Activated CD4-positive, alpha-beta memory T cell treated with anti-CD3 and anti-CD28 coated beads, Interleukin-2, amount 10 ng/mL, durations not matched to agents 7 days and 5 days (primary cell): ENCODE measurements at regions of chr17 and their contacts with region 1.

Region 1: DNA sequence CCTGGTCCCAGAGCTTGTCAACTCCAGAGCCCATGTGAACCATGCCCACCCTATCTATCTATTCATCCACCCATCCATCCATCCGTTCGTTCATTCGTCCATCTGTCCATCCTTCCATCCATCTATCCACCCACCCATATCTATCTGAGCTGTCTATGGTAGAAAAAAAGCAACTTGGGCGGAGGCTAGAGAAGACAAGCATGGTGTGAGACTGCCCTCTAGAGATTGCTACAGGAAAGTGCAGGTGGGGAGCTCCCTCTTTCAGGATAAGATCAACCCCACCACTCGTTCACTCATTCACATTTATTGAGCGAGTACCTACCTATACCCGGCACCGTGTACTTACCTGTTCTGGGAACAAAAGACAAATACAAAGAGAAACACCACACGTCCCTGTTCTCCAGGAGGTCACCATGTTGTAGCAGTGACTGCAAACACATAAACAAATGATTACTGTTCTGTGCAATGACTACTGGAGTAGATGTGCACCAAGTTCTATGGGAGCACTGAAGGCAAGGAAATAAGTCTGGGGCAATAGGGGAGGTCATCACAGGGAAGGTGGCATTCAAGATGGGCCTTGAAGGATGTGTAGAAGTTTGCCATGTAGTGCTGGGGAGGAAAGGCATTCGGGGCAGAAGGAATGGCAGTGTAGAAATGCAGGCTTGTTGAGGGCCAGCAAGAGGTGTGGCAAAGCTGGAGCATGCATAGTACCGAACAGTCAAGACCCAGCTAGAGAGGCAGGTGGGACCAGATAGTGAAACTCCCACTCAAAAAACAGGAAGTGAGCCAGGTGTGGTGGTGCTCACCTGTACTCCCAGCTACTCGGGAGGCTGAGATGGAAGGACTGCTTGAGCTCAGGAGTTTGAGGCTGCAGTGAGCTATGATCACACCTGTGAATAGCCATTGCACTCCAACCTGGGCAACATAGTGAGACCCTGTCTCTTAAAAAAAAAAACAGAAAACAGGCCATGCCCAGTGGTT is 13.4 kb upstream of the ATP5MC1 start:
- DNase-seq: peak; percentile 58
- H3K4me3 Mint-ChIP-seq: no peak overlapping the region
- H3K27ac Mint-ChIP-seq: no peak overlapping the region
- H3K4me1 Mint-ChIP-seq: peaks cover 24% of the 10 kb centered on the region
- H3K27me3 Mint-ChIP-seq: peaks cover 3% of the 10 kb centered on the region

Region 2: DNA sequence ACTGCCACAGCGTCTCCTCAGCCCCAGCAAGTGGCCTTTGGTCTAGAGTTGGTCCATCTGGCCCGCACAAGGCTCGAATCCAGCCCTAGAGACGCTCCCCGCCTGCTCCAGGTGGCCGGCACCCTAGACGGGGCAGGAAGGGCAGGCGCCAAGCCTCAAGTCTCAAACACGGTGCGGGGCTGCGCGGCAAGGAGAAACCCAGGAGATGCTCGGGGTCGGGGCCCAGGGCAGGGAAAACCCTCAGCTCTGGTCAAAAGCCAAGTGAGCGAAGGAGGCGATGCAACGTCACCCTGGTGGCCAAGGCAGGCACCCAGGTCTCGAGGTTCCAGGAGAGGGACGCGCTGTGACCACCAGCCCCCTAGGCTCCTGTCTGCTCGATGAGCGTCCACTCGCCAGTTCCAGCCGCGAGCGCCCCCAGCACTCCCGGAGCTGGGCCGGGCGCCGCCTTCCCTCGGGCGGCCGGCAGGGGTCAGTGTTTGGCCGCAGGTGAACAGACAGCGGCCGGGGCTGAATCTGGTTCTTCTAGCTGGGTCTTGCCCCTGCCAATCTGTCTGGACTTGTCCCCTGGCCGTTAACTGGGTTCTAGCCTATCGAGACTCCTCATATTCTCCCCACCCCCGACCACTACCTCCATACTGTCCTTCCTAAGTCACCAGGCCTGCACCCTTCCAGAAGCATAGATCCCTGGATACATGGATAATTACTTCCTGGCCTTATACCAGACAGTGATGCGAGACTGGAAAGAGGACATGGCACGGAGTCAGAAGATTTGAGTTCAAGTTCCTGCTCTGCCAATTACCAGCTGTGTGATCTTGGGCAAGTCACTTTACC is 200.9 kb before region 1 on chr17:
- CTCF ChIA-PET with region 1: interaction called, 56 read pairs
- POLR2A ChIA-PET with region 1: interaction called, 5 read pairs
- DNase-seq: peak; percentile 71
- H3K4me3 Mint-ChIP-seq: no peak overlapping the region
- H3K27ac Mint-ChIP-seq: no peak overlapping the region
- H3K4me1 Mint-ChIP-seq: no peaks in the 10 kb centered on the region
- H3K27me3 Mint-ChIP-seq: peaks cover 53% of the 10 kb centered on the region

Region 3: DNA sequence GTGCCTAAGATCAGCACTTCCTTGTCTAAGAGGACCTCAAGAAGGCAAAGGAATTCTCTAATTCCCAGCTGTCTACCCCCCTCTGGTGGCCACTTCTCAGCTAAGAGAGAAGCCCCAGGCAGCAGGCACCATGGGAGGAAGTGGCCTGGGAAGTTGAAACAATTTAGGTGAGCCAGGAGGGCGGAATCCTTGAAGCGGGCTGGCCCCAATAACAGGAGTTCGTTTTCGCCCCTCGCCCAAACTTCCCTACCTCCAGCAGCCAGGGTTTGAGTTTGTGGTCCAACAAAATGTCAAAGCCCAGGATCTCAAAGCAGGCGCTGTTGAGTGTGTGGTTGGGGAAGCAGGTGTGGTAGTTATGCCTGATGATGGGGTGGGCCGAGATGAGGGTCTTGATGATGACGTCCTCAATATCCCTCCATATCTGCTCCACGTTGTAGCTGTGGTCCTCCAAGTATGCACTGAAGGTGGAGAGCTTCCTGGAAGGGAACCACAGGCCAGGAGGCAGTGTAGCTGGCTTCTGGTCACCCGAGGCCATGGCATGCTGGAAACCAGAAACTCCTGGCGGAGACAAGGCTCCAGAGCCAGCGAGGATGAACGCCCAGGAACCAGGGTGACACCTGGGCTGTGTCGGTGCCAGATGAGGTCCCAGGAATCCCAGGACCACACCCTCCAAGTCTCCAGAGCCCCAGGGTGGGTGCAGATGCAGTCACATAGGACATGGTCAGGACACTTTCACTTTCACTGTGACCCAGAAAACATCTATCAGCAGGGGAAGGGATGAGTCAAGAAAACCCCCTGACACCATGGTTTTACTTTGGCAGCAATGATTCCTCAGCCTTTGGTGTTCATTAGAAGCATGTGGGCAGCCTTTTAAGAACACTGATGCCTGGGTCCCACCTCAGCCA is 87.8 kb before region 1 on chr17:
- CTCF ChIA-PET with region 1: interaction called, 13 read pairs
- POLR2A ChIA-PET with region 1: no interaction called
- DNase-seq: no peak
- H3K4me3 Mint-ChIP-seq: no peak overlapping the region
- H3K27ac Mint-ChIP-seq: no peak overlapping the region
- H3K4me1 Mint-ChIP-seq: peaks cover 12% of the 10 kb centered on the region
- H3K27me3 Mint-ChIP-seq: peaks cover 44% of the 10 kb centered on the region

Region 4: GRCh38 chr17:48816774-48817590 is 62.2 kb before region 1 on chr17 and contains the start of gene TTLL6:
- CTCF ChIA-PET with region 1: interaction called, 570 read pairs
- POLR2A ChIA-PET with region 1: interaction called, 5 read pairs
- DNase-seq: peak; percentile 81
- H3K4me3 Mint-ChIP-seq: peak within 1 kb of the TSS; percentile 67
- H3K27ac Mint-ChIP-seq: no peak within 1 kb of the TSS
- H3K4me1 Mint-ChIP-seq: peaks cover 18% of the 10 kb centered on the region
- H3K27me3 Mint-ChIP-seq: peaks cover 59% of the 10 kb centered on the region
- total RNA-seq, gene TTLL6: not detected

Region 5: DNA sequence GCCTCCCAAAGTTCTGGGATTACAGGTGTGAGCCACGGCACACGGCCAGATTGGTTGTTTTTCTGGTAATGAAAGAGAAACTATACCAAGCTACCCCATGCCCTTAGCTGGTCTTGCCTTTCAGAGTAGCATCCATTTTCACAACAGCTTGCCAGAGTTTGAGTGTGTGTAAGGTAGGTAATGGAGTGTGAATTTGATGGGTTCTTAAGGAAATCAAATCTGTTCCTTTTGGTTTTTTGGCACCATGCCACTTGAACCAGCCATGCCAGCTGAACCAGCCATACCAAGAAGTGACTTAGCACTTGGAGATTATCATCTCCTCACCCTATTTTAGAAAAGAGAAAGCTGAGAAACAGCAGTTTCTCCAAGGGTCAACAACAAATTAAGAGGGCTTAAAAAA is 43.2 kb before region 1 on chr17:
- CTCF ChIA-PET with region 1: interaction called, 23 read pairs
- POLR2A ChIA-PET with region 1: interaction called, 5 read pairs
- DNase-seq: peak; percentile 22
- H3K4me3 Mint-ChIP-seq: no peak overlapping the region
- H3K27ac Mint-ChIP-seq: peak overlapping the region; percentile 16
- H3K4me1 Mint-ChIP-seq: peaks cover 92% of the 10 kb centered on the region
- H3K27me3 Mint-ChIP-seq: no peaks in the 10 kb centered on the region

Region 6: DNA sequence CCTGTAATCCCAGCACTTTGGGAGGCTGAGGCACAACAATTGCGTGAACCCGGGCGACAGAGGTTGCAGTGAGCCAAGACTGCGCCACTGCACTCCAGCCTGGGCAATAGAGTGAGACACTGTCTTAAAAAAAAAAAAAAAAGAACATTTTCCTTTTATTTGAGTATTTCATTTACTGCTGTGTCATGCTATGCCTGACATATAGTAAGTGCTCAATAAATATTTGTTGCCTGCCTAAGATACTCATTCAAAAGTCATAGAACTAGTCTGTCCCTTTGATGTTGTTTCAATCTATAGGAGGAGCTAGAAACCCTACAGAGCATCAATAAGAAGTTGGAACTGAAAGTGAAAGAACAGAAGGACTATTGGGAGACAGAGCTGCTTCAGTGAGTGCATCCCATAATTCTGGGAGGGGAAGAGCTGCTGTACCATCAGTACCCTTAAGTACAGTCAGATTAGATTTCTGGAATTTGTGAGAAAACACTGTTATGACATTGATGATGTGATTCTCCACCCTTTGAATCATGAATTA is 28.4 kb before region 1 on chr17:
- CTCF ChIA-PET with region 1: interaction called, 18 read pairs
- POLR2A ChIA-PET with region 1: interaction called, 3 read pairs
- DNase-seq: no peak
- H3K4me3 Mint-ChIP-seq: no peak overlapping the region
- H3K27ac Mint-ChIP-seq: peak overlapping the region; percentile 1
- H3K4me1 Mint-ChIP-seq: peaks cover 30% of the 10 kb centered on the region
- H3K27me3 Mint-ChIP-seq: no peaks in the 10 kb centered on the region

Region 7: DNA sequence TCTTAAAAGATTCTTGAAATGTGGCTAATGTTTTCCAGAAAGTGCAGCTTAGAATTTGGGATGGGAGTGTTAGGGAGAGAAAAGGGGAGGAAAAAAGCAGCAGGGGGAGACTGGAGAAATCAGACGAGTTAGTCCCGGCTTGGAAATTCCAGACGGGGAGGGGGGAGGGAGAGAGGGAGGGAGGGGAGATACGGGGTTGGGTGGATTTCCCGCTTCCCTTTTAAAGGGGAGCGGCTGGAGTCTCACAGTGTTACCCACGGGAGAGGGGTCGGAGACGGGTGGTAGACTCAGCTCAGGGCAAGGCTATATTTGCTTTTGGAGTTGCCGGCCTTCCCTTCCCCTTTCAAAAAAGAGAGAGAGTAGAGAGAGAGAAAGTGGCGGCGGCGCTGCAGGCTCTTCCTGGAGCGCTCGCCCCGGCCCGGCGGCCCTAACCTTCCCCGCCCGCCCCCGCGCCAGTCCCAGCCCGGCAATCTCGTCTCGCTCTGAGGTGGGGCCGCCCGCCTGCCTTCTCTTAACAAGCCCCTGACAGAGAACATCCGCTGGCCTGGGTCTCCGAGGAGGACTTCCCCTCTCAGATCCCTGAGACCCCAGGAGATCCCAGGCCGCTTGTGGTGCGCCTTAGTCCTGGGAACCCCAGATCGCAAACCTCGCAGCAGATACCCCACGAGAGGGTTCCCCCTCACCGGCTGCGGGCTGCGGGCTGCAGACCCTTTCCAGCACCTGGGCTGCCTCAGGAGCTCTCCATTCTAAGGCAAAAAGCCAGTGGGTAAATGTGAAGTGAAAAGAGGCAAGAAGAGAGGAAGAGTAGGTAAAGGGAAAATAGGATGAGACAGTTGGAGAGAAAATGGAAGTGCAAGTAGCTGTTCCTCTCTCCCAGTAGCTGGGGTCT is 124.7 kb after region 1 on chr17:
- CTCF ChIA-PET with region 1: no interaction called
- POLR2A ChIA-PET with region 1: no interaction called
- DNase-seq: no peak
- H3K4me3 Mint-ChIP-seq: no peak overlapping the region
- H3K27ac Mint-ChIP-seq: no peak overlapping the region
- H3K4me1 Mint-ChIP-seq: peaks cover 4% of the 10 kb centered on the region
- H3K27me3 Mint-ChIP-seq: peaks cover 91% of the 10 kb centered on the region

Region 8: DNA sequence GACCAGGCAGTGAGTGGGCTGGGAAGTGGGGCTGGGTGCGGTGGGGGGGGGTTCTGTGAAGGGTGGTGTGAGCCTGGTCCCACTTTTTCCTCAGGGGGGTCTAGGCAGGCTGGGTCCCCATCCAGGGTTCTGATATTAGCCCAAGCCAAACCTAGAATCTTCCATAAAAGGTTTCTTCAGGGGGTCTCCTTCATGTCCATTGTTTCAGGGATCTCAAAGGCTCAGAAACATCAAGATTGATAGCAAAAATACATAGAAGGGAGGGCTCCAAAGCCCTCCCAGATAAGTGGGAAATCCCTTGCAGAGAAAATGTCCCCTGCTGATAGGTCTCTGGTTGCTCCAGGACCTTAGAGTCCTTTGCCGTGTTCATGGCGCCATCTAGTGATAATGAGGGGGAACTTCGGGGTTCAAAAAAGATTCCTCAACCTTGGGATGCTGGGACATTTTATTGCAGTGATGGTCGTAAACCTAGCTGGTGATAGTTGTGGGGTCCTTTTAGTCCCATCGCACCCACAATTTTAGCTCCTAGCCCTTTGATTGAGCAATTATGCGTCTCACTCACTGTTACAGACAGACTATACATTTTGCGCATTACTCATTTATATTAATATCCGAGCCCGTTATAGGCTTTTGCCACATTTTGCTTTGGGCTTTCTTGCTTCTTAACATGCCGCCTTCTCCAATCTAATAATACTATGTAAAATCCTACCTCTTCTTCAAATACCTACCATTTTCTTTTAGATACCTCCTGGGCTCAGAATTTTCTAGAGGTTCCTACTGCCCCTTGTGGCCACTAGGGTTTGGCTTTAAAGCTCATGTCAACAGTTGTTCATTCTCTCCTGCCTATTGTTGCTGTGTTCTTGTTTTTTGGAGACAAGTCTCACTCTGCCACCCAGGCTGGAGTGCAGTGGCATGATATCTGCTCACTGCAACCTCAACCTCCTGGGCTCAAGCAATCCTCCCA is 153.0 kb after region 1 on chr17:
- CTCF ChIA-PET with region 1: interaction called, 20 read pairs
- POLR2A ChIA-PET with region 1: interaction called, 4 read pairs
- DNase-seq: peak; percentile 55
- H3K4me3 Mint-ChIP-seq: no peak overlapping the region
- H3K27ac Mint-ChIP-seq: no peak overlapping the region
- H3K4me1 Mint-ChIP-seq: no peaks in the 10 kb centered on the region
- H3K27me3 Mint-ChIP-seq: peaks cover 5% of the 10 kb centered on the region